CD8-positive, alpha-beta T cell (primary cell): ENCODE measurements at regions of chr10 and their contacts with region 1.

Region 1: DNA sequence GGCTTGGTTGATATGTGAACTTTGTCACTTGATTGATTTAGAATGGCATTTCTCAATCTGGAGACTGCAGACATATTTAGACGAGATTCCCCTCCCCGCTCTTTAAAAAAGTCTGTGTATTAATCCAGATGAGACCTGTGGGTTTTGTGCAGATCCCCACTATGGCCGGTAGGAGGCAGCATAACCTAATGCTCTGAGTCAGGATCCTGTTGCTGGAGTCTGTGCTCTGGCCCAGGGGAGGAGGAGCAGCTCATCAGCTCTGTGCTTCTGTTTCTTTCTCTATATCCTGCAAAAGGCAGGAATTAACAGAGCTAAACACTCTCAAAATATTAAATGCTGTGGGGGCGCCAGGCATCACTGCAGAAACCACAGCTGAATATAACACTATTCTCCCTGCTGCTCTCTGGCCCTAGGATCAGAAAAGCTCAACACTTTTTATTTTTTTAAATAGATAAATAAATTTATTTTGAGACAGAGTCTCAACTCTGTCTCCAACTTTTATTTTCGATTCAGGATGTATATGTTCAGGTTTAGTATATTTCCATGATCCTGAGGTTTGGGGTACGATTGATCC is 23.9 kb upstream of the SEPHS1 start:
- DNase-seq: peak; percentile 6 to 85 (median 65)
- ATAC-seq: peak; percentile 100
- H3K4me3 ChIP-seq: no peak overlapping the region
- H3K4me3 Mint-ChIP-seq: no peak overlapping the region
- H3K27ac ChIP-seq: no peak overlapping the region
- H3K27ac Mint-ChIP-seq: no peak overlapping the region
- H3K4me1 ChIP-seq: no peaks in the 10 kb centered on the region
- H3K4me1 Mint-ChIP-seq: peaks cover 4% of the 10 kb centered on the region
- H3K27me3 ChIP-seq: no peaks in the 10 kb centered on the region
- H3K27me3 Mint-ChIP-seq: peaks cover 7% of the 10 kb centered on the region
- CTCF ChIP-seq: peak; percentile 93

Region 2: DNA sequence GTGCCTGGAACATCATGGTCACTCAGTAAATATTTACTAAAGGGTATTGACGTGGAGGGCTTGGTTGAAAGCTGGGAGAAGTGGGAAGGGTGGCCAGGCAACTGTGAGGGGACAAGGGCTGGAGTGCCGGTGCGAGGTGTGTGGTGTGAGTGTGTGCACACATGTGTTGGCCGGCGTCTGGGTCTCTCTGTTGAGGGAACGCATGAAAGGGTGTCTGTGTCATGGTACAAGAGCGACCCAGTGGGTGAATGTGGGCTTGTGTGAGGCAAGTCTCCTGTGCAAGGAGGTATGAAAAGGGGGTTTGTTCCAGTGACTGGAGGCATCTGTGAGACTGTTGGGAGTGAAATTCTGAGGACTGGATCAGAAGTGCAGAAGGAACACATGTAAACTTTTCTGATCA is 108.4 kb before region 1 on chr10:
- CTCF ChIA-PET with region 1: no interaction called
- POLR2A ChIA-PET with region 1: no interaction called
- intact Hi-C with region 1: no loop called
- DNase-seq: no peak
- ATAC-seq: no peak
- H3K4me3 ChIP-seq: no peak overlapping the region
- H3K4me3 Mint-ChIP-seq: no peak overlapping the region
- H3K27ac ChIP-seq: no peak overlapping the region
- H3K27ac Mint-ChIP-seq: no peak overlapping the region
- H3K4me1 ChIP-seq: no peaks in the 10 kb centered on the region
- H3K4me1 Mint-ChIP-seq: no peaks in the 10 kb centered on the region
- H3K27me3 ChIP-seq: peaks cover 0 to 3% of the 10 kb centered on the region in 2 experiments
- H3K27me3 Mint-ChIP-seq: peaks cover 19% of the 10 kb centered on the region
- CTCF ChIP-seq: no peak

Region 3: GRCh38 chr10:13382703-13383398 is 10.9 kb after region 1 on chr10:
- CTCF ChIA-PET with region 1: interaction called, 25 read pairs
- POLR2A ChIA-PET with region 1: no interaction called
- intact Hi-C with region 1: no loop called
- DNase-seq: no peak
- ATAC-seq: no peak
- H3K4me3 ChIP-seq: no peak overlapping the region
- H3K4me3 Mint-ChIP-seq: peak overlapping the region; percentile 50
- H3K27ac ChIP-seq: no peak overlapping the region
- H3K27ac Mint-ChIP-seq: no peak overlapping the region
- H3K4me1 ChIP-seq: peaks cover 11% of the 10 kb centered on the region
- H3K4me1 Mint-ChIP-seq: peaks cover 11% of the 10 kb centered on the region
- H3K27me3 ChIP-seq: peaks cover 4 to 11% of the 10 kb centered on the region in 2 experiments
- H3K27me3 Mint-ChIP-seq: peaks cover 56% of the 10 kb centered on the region
- CTCF ChIP-seq: no peak

Region 4: DNA sequence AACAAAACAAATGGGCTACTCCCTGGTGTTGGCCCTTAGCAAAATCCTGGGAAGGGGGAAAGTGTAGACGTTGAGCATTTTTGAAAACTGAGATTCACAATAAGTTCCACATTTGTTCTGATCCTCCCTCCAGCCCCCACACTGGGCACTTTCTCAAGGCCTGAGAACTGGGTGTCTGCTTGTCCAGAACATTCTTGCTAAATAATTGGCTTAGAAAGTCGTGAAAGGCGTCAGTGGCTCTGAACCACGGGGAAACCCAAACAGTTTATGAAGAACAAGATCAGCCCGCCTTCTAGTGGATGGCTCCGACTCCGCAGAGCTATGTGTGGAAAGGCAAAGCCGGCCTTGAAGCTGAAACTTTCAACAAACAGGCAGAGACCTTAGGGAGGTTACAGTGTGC is 584.8 kb after region 1 on chr10:
- CTCF ChIA-PET with region 1: no interaction called
- POLR2A ChIA-PET with region 1: no interaction called
- intact Hi-C with region 1: no loop called
- DNase-seq: no peak
- ATAC-seq: no peak
- H3K4me3 ChIP-seq: no peak overlapping the region
- H3K4me3 Mint-ChIP-seq: no peak overlapping the region
- H3K27ac ChIP-seq: no peak overlapping the region
- H3K27ac Mint-ChIP-seq: no peak overlapping the region
- H3K4me1 ChIP-seq: no peaks in the 10 kb centered on the region
- H3K4me1 Mint-ChIP-seq: peaks cover 5% of the 10 kb centered on the region
- H3K27me3 ChIP-seq: no peaks in the 10 kb centered on the region
- H3K27me3 Mint-ChIP-seq: peaks cover 1% of the 10 kb centered on the region
- CTCF ChIP-seq: no peak